Dorsolateral prefrontal cortex (tissue), 120 donors: ENCODE measurements at regions of chr17 and their contacts with region 1.

Region 1: DNA sequence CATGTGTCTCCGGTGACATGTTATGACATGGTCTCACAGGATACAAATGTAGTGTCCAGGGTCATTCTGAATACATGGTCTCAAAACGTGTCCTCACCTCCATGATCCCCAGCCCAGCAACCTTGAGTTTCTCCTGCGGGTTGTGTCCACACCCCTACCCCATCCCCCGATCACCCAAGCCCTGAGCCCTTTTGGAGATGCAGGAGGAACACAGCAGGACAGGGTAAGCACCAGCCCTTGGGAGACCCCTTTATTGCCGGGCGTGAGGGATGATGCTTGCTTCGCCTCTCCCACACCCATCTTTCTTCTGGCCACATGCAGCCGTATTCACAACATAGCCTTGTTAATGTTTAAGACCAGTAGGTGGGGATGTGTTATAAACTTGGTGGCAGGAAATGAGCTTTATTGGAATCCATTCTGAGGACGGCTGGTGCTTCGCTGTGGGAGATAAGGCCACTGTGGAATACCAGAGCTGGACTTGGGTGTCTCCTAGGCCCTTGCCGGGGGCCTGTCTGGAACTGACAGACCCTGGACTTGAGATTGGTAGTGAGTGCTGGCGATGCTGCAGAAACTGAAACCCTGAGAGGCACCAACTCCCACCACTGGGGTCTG is 5.5 kb downstream of the TMEM132E start:
- DNase-seq: no peak
- H3K4me3 ChIP-seq: peak overlapping the region in 1 of 59 donors; percentile 26
- H3K27ac ChIP-seq: peak overlapping the region in 1 of 59 donors; percentile 31
- H3K27me3 ChIP-seq: peaks cover 0 to 19% (median 0%) of the 10 kb centered on the region in 45 donors
- CTCF ChIP-seq: peak in 42 of 56 donors; percentile 17 to 57 (median 36)

Region 2: GRCh38 chr17:34565713-34566112 is 19.2 kb before region 1 on chr17:
- intact Hi-C with region 1: loop called in 1 of 2 experiments (anchors 1 kb)
- DNase-seq: no peak
- H3K4me3 ChIP-seq: no peak overlapping the region
- H3K27ac ChIP-seq: no peak overlapping the region
- H3K27me3 ChIP-seq: peaks cover 0 to 14% (median 0%) of the 10 kb centered on the region in 45 donors
- CTCF ChIP-seq: no peak

Region 3: DNA sequence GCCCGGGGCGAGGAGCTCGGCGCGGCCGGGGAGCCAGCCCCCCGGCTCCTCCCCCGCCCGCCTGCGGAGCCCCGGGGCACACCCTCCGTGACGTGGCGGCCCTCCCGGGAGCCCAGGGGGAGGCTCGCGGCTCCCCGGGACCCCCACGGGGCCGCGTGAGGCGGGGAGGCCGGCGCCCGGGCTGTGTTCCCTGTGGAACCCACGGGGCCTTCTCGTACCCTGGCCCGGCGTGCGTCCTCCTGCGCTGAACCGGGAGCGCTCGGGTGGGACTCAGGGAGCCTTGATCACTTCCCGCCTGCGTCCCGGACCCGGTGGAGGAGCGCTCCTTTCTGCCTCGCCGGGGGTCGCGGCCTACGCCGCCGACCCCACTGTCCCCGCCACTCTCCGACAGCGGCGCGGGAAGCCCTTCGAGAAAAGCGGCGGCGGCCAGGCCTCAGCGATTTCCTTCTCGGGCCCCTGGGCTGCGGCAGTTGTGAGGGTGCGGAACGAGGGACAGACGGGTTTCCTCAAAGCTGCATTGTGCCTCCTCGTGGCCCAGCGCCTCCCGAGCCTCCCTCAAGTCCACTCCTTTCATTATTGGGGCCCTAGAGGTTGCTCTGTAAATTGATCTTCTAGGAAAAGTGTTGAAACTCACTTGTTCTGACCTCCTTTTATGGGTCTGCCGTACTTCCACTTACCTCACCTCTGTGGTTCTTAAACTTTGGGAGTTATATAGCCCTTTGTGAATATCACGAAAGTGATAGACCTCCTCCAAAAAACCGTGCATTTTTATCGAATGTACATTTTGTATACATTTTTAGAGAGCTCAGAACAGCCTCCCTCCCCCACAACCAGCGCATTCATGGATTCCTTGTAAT is 396.0 kb after region 1 on chr17:
- intact Hi-C with region 1: loop called in 1 of 2 experiments (anchors 10 kb)
- DNase-seq: peak in 9 of 10 donors; percentile 41 to 73 (median 61)
- H3K4me3 ChIP-seq: peak overlapping the region; percentile 55 to 100 (median 95)
- H3K27ac ChIP-seq: peak overlapping the region; percentile 77 to 99 (median 94)
- H3K27me3 ChIP-seq: no peaks in the 10 kb centered on the region
- CTCF ChIP-seq: peak in 33 of 56 donors; percentile 13 to 54 (median 33)

Region 4: DNA sequence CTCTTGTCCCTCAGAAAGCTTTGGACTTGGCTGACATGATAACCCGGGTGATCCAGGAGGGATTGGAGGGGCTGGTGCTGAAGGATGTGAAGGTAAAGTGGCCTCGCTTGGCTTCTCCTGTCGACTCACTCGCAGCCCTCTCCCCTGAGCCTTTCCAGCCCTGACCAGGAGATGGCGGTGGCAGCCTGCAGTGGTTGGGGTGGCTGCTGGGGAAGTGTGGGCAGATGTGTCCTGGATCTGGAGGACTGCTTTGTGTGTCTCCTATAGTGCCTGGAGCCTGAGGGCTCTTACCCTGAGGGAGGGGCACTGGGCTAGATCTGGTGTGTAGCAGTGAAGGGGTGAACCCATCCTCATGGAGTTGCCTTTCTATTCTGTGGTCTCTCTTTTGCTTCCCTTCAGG is 413.3 kb after region 1 on chr17:
- intact Hi-C with region 1: loop called in 1 of 2 experiments (anchors 10 kb)
- DNase-seq: peak in 9 of 10 donors; percentile 69 to 85 (median 75)
- H3K4me3 ChIP-seq: peak overlapping the region in 1 of 59 donors; percentile 2
- H3K27ac ChIP-seq: peak overlapping the region in 58 of 59 donors; percentile 0 to 100 (median 79)
- H3K27me3 ChIP-seq: no peaks in the 10 kb centered on the region
- CTCF ChIP-seq: peak in 55 of 56 donors; percentile 44 to 93 (median 80)